Panc1 (cell line): ENCODE measurements at regions of chr19 and their contacts with region 1.

Region 1: GRCh38 chr19:46296722-46297461 is at the start of gene HIF3A:
- DNase-seq: no peak
- ATAC-seq: no peak
- H3K4me3 ChIP-seq: peak within 1 kb of the TSS in 1 of 2 experiments; percentile 3; a peak in 1 of 4 replicates
- H3K27ac ChIP-seq: no peak within 1 kb of the TSS
- H3K4me1 ChIP-seq: no peaks in the 10 kb centered on the region
- H3K27me3 ChIP-seq: no peaks in the 10 kb centered on the region; the same call in 1 of the 2 replicates
- CTCF ChIP-seq: no peak
- total RNA-seq, gene HIF3A: not detected

Region 2: GRCh38 chr19:45842198-45842597 is 454.7 kb before region 1 on chr19:
- CTCF ChIA-PET with region 1: no interaction called
- POLR2A ChIA-PET with region 1: no interaction called
- in situ Hi-C with region 1: no loop called
- intact Hi-C with region 1: no loop called
- DNase-seq: no peak
- ATAC-seq: no peak
- H3K4me3 ChIP-seq: no peak overlapping the region
- H3K27ac ChIP-seq: no peak overlapping the region
- H3K4me1 ChIP-seq: no peaks in the 10 kb centered on the region
- H3K27me3 ChIP-seq: no peaks in the 10 kb centered on the region
- CTCF ChIP-seq: no peak

Region 3: DNA sequence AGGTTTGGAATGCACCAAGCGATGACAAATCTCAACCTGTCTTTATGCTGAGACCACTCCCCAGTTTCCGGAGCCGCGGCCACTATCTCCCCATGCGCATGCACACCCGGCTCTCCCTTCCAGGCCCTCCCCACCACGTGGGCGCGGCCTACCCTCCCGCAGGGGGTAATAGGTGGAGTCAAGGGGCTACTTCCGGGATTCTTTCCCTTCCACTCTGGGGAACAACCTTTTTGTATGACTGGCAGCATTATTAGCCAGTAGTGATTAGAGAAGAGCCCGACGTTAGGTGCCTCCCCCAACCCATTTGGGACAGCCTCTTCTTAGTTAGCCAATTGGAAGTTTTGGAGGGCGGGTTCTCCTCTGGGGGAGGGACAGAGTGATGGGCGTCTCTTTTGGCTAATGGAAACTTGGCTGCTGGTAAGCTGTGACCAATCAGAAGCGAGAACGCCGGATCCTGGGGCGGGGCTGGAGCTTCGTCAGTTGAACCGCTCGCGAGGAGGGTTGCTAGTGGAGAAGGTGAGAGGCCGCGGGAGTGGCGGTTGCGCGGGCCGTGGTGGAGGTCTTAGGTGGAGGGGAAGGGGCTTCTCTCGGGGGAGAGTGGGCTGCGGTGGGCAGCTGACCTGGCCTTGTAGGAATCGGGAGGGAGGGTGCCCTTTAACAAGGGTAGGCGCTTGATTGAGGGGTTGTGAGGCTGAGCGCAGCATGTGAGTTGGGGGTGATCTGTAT is 301.7 kb before region 1 on chr19 and contains the start of gene CCDC61:
- CTCF ChIA-PET with region 1: no interaction called
- POLR2A ChIA-PET with region 1: interaction called, 22 read pairs
- in situ Hi-C with region 1: no loop called
- intact Hi-C with region 1: no loop called
- DNase-seq: peak; percentile 97
- ATAC-seq: peak; percentile 99
- H3K4me3 ChIP-seq: peak within 1 kb of the TSS; percentile 59 to 97
- H3K27ac ChIP-seq: peak within 1 kb of the TSS; percentile 93
- H3K4me1 ChIP-seq: peaks cover 8% of the 10 kb centered on the region
- H3K27me3 ChIP-seq: no peaks in the 10 kb centered on the region
- CTCF ChIP-seq: no peak
- total RNA-seq, gene CCDC61: 17.9 TPM

Region 4: GRCh38 chr19:46201413-46202310 is 95.2 kb before region 1 on chr19:
- CTCF ChIA-PET with region 1: interaction called, 11 read pairs
- POLR2A ChIA-PET with region 1: no interaction called
- in situ Hi-C with region 1: no loop called
- intact Hi-C with region 1: no loop called
- DNase-seq: no peak
- ATAC-seq: no peak
- H3K4me3 ChIP-seq: no peak overlapping the region
- H3K27ac ChIP-seq: no peak overlapping the region
- H3K4me1 ChIP-seq: no peaks in the 10 kb centered on the region
- H3K27me3 ChIP-seq: no peaks in the 10 kb centered on the region
- CTCF ChIP-seq: no peak

Region 5: GRCh38 chr19:46386151-46386550 is 89.3 kb after region 1 on chr19:
- CTCF ChIA-PET with region 1: no interaction called
- POLR2A ChIA-PET with region 1: interaction called, 18 read pairs
- in situ Hi-C with region 1: no loop called
- intact Hi-C with region 1: no loop called
- DNase-seq: no peak
- ATAC-seq: no peak
- H3K4me3 ChIP-seq: no peak overlapping the region
- H3K27ac ChIP-seq: no peak overlapping the region
- H3K4me1 ChIP-seq: no peaks in the 10 kb centered on the region
- H3K27me3 ChIP-seq: no peaks in the 10 kb centered on the region
- CTCF ChIP-seq: no peak